ENCODE measurements at regions of chr16 and their contacts with region 1.

Region 1: GRCh38 chr16:70267516-70267915 is 15.8 kb upstream of the EXOSC6 start:
- DNase-seq: peak in 1 of 2 donors; percentile 48
- ATAC-seq: no peak
- H3K4me3 ChIP-seq: no peak overlapping the region
- H3K27ac ChIP-seq: no peak overlapping the region
- H3K4me1 ChIP-seq: no peaks in the 10 kb centered on the region
- H3K27me3 ChIP-seq: no peaks in the 10 kb centered on the region

Region 2: GRCh38 chr16:70324998-70325747 is 57.7 kb after region 1 on chr16:
- intact Hi-C with region 1: loop called in 1 of 2 experiments (anchors 10 kb)
- DNase-seq: no peak
- ATAC-seq: no peak
- H3K4me3 ChIP-seq: no peak overlapping the region
- H3K27ac ChIP-seq: no peak overlapping the region
- H3K4me1 ChIP-seq: no peaks in the 10 kb centered on the region
- H3K27me3 ChIP-seq: no peaks in the 10 kb centered on the region

Measured in aorta (tissue), 5 donors.